Activated CD4-positive, alpha-beta T cell treated with anti-CD3 and anti-CD28 coated beads for 36 hours (primary cell): ENCODE measurements at regions of chr19 and their contacts with region 1.

Region 1: DNA sequence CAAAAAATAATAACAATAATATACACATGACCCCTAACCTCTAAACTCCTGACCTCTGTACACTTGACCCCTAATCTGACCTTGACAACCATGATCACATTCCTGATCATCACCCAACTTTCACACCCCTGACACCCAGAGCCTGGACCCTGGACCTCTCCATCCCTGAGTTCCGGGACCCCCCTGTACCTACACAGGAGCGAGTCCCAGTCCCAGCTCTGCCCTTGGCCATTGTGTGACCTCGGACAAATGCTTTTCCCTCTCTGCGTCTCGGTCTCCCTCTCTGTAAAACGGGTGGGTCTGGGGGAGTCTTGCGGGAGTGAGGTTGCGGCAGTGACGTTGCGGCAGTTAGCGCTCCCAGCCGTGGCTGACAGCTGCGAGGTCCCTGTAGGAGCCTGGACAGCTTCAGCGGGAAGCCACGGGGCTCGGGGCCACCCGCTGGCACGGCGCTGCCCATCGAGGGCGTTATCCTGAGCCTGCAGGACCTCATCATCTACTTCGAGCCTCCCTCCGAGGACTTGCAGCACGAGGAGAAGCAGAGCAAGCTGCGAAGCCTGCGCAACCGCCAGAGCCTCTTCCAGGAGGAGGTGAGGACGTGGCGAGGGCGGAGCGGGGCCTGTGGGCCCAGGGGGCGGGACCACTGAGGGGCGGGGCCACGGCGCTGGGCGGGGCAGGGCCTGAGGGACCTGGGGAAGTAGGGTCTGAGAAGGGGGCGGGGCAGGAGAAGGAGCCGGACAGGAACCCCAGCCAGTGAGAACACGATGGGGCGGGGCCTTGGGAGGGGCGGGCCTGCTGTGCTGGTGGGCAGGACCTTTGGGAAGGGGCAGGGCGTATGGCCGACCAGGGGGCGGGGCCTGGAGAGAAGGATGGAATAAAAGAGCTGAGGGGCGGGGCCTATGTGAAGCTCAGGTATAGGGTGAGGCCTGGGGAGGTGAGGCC is 19.2 kb downstream of the RYR1 start:
- DNase-seq: peak; percentile 63
- ATAC-seq: peak; percentile 64
- H3K4me3 Mint-ChIP-seq: no peak overlapping the region
- H3K27ac Mint-ChIP-seq: no peak overlapping the region
- H3K4me1 Mint-ChIP-seq: no peaks in the 10 kb centered on the region
- H3K27me3 Mint-ChIP-seq: peaks cover 2% of the 10 kb centered on the region

Region 2: DNA sequence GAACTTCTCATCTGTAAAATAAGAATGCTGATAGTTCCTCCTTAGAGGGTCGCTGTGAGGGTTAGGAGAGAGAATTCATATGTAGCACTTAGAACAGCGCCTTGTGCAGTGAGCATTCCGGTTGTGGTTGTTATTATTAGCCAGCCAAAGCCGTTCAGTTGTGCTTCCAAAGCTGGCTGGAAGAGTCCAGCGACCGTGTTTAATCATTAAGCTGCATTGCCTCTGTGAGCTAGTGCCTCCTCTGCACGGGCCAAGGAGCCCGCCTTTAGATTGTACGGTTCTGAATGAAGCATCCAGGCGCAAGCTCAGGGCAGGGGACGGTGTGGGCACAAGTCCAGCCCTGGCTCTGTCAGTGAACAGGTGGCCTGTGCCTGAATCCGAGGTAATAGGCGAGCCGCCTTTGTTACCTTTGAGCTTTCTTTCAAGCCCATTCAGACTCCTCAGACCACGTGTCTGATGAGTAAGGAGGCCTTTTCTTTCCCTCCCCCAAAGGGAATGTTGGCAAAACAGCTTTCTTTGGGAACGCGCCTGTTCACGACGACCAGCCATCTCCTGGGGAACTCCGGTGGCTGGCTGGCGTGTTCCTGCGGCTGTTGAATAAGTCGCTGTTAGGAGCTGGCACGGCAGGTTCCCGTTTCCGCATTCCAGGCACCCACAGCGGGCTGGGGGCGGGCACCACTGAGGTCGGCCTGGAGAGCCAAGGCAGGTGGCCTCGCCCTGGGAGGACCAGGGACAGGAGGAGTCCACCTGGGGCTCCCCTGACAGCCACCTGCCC is 520.6 kb before region 1 on chr19:
- CTCF ChIA-PET with region 1: no interaction called
- POLR2A ChIA-PET with region 1: no interaction called
- intact Hi-C with region 1: no loop called
- DNase-seq: peak; percentile 19
- ATAC-seq: no peak
- H3K4me3 Mint-ChIP-seq: no peak overlapping the region
- H3K27ac Mint-ChIP-seq: no peak overlapping the region
- H3K4me1 Mint-ChIP-seq: peaks cover 7% of the 10 kb centered on the region
- H3K27me3 Mint-ChIP-seq: no peaks in the 10 kb centered on the region

Region 3: GRCh38 chr19:38441657-38442348 is 10.9 kb before region 1 on chr19:
- CTCF ChIA-PET with region 1: no interaction called
- POLR2A ChIA-PET with region 1: no interaction called
- intact Hi-C with region 1: loop called in 1 of 2 experiments (anchors 2 kb)
- DNase-seq: peak; percentile 36
- ATAC-seq: peak; percentile 85
- H3K4me3 Mint-ChIP-seq: no peak overlapping the region
- H3K27ac Mint-ChIP-seq: no peak overlapping the region
- H3K4me1 Mint-ChIP-seq: peaks cover 4% of the 10 kb centered on the region
- H3K27me3 Mint-ChIP-seq: peaks cover 4% of the 10 kb centered on the region